SK-N-SH (cell line): ENCODE measurements at regions of chr17 and their contacts with region 1.

Region 1: GRCh38 chr17:13429201-13429600 is 172.5 kb downstream of the HS3ST3A1 start:
- DNase-seq: peak; percentile 63
- H3K4me3 ChIP-seq: no peak overlapping the region
- H3K27ac ChIP-seq: peak overlapping the region; percentile 80 to 88
- H3K4me1 ChIP-seq: peaks cover 18 to 23% of the 10 kb centered on the region in 2 experiments
- H3K27me3 ChIP-seq: no peaks in the 10 kb centered on the region
- CTCF ChIP-seq: no peak
- EP300 ChIP-seq: peak; percentile 81 to 96; a peak in 3 of 4 replicates
- RAD21 ChIP-seq: peak; percentile 36

Region 2: GRCh38 chr17:13403982-13404946 is 24.9 kb before region 1 on chr17:
- CTCF ChIA-PET with region 1: interaction called, 4 read pairs
- POLR2A ChIA-PET with region 1: interaction called, 10 read pairs
- DNase-seq: peak; percentile 68
- H3K4me3 ChIP-seq: no peak overlapping the region
- H3K27ac ChIP-seq: peak overlapping the region in 1 of 2 experiments; percentile 83; a peak in 2 of 4 replicates
- H3K4me1 ChIP-seq: peaks cover 0 to 21% of the 10 kb centered on the region in 2 experiments; a peak in 2 of 4 replicates
- H3K27me3 ChIP-seq: no peaks in the 10 kb centered on the region
- CTCF ChIP-seq: no peak
- EP300 ChIP-seq: peak in 1 of 2 experiments; percentile 98; a peak in 2 of 4 replicates
- RAD21 ChIP-seq: peak; percentile 33; the same call in 1 of the 2 replicates